ENCODE measurements at regions of chr10 and their contacts with region 1.

Region 1: GRCh38 chr10:112446855-112447711 is at the starts of genes VTI1A and ZDHHC6:
- DNase-seq: peak; percentile 86
- H3K4me3 Mint-ChIP-seq: peak within 1 kb of the TSS; percentile 87
- H3K27ac Mint-ChIP-seq: peak within 1 kb of the TSS; percentile 86
- H3K4me1 Mint-ChIP-seq: peaks cover 56% of the 10 kb centered on the region
- H3K27me3 Mint-ChIP-seq: no peaks in the 10 kb centered on the region
- total RNA-seq, gene VTI1A: 32.9 to 37.3 TPM
- total RNA-seq, gene ZDHHC6: 46.3 to 47.0 TPM

Region 2: DNA sequence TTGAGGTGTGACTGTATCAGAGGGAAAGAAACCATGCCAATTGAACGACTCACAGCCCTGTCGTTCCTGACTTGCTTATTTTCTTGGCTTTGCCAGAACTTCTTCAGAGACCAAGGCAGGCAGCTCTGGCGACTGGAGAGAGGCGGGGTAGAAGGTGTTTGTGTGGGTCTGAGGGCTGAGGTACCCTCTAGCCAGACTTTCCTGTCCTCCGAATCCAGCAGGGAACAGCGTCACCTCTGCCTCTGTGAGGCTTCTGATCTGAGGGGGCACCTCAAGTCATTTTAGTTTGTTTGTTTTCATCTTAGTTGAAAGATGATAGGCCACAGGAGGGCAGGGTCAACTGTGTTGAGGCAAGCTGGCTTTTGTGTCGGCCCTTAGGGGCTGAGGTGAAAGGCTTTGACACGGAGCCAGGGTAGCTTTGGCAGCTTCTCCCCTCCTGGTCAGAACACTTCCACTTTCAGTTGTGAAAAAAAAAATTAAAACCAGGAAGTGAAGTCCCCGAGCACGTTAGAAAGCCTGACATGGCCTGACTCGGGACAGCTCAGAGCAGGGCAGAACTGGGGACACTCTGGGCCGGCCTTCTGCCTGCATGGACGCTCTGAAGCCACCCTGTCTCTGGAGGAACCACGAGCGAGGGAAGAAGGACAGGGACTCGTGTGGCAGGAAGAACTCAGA is 71.2 kb before region 1 on chr10:
- CTCF ChIA-PET with region 1: interaction called, 4 read pairs
- POLR2A ChIA-PET with region 1: interaction called, 53 read pairs
- DNase-seq: peak; percentile 62
- H3K4me3 Mint-ChIP-seq: peak overlapping the region; percentile 100
- H3K27ac Mint-ChIP-seq: peak overlapping the region; percentile 99
- H3K4me1 Mint-ChIP-seq: peaks cover 57% of the 10 kb centered on the region
- H3K27me3 Mint-ChIP-seq: no peaks in the 10 kb centered on the region

Region 3: DNA sequence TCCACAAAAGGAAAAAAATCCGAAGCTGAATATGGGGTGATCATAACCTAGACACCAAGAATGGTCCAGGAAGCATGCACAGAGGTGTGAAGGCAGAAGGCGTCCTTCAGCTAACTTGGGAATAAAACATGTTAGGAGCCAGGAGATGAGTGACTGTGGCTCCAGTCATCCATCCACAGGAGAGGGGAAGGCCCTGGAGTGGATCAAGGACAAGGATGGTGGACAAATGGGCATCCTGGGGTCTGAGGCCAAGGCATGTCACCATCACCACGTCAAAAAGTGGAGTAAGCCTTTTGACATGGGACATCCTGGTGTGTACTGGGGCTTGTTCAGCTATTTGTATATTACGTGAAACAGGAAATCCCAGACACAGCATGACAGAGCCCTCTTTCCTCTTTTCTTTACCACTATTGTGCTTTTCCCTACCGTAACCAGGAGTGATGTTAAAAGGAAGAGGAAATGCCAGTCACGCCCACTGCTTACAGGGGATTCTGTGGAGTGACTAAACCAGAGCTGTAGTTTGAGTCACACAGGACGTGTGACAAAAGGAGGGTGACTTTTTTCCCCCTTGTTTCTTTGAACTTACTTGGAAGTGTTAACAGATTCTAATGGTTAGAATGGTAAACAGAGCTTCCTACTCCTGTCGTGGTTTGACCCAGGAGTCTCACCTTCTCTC is 57.8 kb before region 1 on chr10:
- CTCF ChIA-PET with region 1: no interaction called
- POLR2A ChIA-PET with region 1: interaction called, 11 read pairs
- DNase-seq: peak; percentile 64
- H3K4me3 Mint-ChIP-seq: no peak overlapping the region
- H3K27ac Mint-ChIP-seq: peak overlapping the region; percentile 75
- H3K4me1 Mint-ChIP-seq: peaks cover 50% of the 10 kb centered on the region
- H3K27me3 Mint-ChIP-seq: no peaks in the 10 kb centered on the region

Region 4: GRCh38 chr10:112404616-112405015 is 42.5 kb before region 1 on chr10:
- CTCF ChIA-PET with region 1: no interaction called
- POLR2A ChIA-PET with region 1: no interaction called
- DNase-seq: no peak
- H3K4me3 Mint-ChIP-seq: no peak overlapping the region
- H3K27ac Mint-ChIP-seq: no peak overlapping the region
- H3K4me1 Mint-ChIP-seq: no peaks in the 10 kb centered on the region
- H3K27me3 Mint-ChIP-seq: no peaks in the 10 kb centered on the region

Region 5: DNA sequence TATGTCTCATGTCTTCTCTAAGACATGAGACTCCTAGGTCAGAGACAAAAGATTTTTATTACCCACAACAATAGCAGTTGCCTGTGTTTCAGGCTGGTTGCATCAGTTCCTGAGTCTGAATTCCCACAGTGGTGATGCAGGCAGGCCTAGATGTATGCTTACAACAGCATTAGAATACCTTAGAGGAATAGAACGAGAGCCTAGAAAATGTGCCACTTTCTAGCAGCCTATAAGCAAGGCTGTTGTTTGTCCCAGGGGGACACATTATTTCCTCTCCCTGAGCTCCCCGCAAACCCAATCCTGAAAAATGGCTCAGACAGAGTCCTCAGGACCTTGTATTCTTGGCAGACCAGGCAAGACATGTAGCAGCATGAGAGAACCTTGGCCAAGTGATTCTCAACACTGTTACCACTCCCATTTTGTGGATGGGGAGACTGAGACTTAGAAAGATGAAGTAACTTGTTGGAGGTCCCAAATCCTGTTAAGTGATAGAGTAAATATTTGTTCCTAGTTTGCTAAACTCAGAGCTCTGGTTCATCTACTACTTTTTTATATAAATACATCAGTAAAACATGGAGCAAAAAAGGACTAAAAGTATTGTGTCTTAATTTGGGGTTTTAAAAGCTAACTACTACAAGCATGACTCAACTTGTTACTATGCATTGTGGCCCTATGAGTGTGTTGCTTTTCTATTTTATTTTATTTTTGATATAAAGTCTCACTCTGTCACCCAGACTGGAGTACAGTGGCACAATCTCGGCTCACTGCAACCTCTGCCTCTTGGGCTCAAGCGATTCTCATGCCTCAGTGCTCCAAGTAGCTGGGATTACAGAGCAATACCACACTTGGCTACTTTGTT is 14.2 kb after region 1 on chr10:
- CTCF ChIA-PET with region 1: interaction called, 4 read pairs
- POLR2A ChIA-PET with region 1: interaction called, 10 read pairs
- DNase-seq: peak; percentile 31
- H3K4me3 Mint-ChIP-seq: no peak overlapping the region
- H3K27ac Mint-ChIP-seq: peak overlapping the region; percentile 66
- H3K4me1 Mint-ChIP-seq: peaks cover 7% of the 10 kb centered on the region
- H3K27me3 Mint-ChIP-seq: no peaks in the 10 kb centered on the region